Activated T-helper 2 cell treated with anti-CD3 and anti-CD28 coated beads, Interferon-gamma antibody, Interleukin-2, Interleukin-4, amounts not matched to agents 10 μg/mL and 5 μg/mL and 100 μg/mL, durations not matched to agents 14 hours and 24 hours and 36 hours (primary cell): ENCODE measurements at regions of chr1 and their contacts with region 1.

Region 1: GRCh38 chr1:230642263-230642959 is at the start of gene COG2:
- DNase-seq: peak; percentile 92
- H3K4me3 Mint-ChIP-seq: peak within 1 kb of the TSS; percentile 98
- H3K27ac Mint-ChIP-seq: peak within 1 kb of the TSS; percentile 95
- H3K4me1 Mint-ChIP-seq: peaks cover 41% of the 10 kb centered on the region
- H3K27me3 Mint-ChIP-seq: peaks cover 19% of the 10 kb centered on the region
- total RNA-seq, gene COG2: 36.9 and 38.8 TPM in 2 replicates

Region 2: DNA sequence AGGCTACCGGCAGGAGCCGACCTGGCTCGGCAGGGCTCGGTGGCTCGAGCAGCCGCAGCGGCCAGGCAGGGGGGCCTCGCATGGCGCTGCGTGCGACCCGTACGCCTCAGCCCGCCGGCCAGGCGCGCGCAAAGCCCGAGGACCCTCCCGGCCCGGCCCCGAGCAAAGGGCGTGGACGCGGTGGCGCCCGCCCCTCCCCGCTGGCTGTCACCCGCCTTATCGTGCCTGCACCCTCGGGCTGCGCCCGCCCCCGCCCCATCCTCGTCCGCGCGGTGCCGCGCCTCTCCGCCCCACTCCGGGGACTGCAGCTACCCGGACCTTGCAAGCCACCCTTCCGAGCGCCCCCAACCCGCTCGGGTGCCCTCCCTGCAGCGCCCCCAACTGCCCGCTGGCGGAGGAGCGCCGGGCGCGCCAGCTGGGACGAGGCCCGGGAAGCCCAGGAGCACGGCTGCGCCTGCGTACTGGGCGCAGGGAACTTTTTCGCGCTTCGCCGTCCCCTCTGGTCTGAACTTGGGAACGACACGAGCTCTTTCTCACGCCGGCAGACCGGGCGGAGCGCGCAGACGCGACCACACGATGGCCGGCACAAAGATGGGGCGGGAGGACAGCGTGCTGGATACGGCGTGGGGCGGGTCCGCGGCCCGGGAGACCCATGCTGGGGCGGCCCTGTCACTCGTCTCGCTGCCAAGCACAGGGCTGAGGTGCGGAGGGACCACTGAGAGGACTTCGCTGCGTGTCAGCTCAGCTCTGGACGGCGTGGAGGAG is 1083.7 kb before region 1 on chr1 and contains the start of gene ABCB10:
- intact Hi-C with region 1: loop called (anchors 5 kb)
- DNase-seq: peak; percentile 82
- H3K4me3 Mint-ChIP-seq: peak within 1 kb of the TSS; percentile 87
- H3K27ac Mint-ChIP-seq: peak within 1 kb of the TSS; percentile 80
- H3K4me1 Mint-ChIP-seq: peaks cover 34% of the 10 kb centered on the region
- H3K27me3 Mint-ChIP-seq: no peaks in the 10 kb centered on the region
- total RNA-seq, gene ABCB10: 40.1 and 42.7 TPM in 2 replicates

Region 3: DNA sequence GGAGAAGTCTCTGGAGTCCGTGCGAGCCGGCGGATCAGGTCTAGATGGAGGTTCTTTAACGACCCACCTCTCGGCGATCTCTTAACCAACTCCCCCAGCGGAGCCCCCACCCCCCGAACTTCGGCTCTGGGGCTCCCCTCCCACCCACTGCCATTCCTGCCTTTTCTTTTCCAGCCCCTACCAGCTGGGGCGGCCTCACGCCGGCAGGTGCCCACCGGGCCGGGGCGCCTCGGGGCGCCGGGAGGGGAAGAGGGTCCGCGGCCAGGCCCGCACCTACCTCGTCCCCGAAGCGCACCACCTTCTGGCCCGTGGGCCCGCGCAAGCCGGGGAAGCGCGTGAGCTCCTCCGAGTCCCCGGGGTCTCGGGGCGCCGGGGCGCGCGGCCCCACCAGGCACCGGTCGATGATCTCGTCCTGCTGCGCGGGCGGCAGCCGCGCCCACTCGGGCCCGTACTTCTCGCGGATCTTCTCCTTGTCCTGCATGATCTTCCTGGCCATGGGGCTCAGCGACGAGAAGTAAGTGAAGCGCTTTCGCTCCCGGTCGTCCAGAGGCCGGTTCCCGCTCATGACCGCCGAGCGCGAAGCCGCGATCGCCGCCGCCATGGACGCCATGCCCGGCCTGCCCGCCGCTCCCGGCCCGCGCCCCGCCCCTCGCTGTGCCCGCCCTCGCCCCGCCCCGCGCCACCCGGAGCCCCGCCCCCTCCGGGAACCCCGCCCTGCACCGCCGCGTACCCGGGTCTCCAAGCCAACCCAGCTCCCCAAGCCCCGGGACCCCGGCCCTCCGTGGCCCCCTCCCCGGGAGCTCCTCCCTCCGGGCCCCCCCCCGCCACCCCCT is 225.7 kb after region 1 on chr1 and contains the start of gene C1orf198:
- intact Hi-C with region 1: loop called (anchors 5 kb)
- DNase-seq: peak; percentile 67
- H3K4me3 Mint-ChIP-seq: peak within 1 kb of the TSS; percentile 82
- H3K27ac Mint-ChIP-seq: peak within 1 kb of the TSS; percentile 64
- H3K4me1 Mint-ChIP-seq: peaks cover 19% of the 10 kb centered on the region
- H3K27me3 Mint-ChIP-seq: peaks cover 31% of the 10 kb centered on the region
- total RNA-seq, gene C1orf198: 8.9 and 9.1 TPM in 2 replicates

Region 4: GRCh38 chr1:231211005-231211857 is 568.8 kb after region 1 on chr1:
- intact Hi-C with region 1: loop called (anchors 5 kb)
- DNase-seq: peak; percentile 81
- H3K4me3 Mint-ChIP-seq: peak overlapping the region; percentile 80
- H3K27ac Mint-ChIP-seq: no peak overlapping the region
- H3K4me1 Mint-ChIP-seq: peaks cover 10% of the 10 kb centered on the region
- H3K27me3 Mint-ChIP-seq: peaks cover 3% of the 10 kb centered on the region